ENCODE measurements at regions of chr7 and their contacts with region 1.

Region 1: GRCh38 chr7:151519765-151520418 is at the start of gene RHEB:
- DNase-seq: peak; percentile 93 to 99 (median 98)
- ATAC-seq: peak; percentile 91
- H3K4me3 ChIP-seq: peak within 1 kb of the TSS; percentile 91
- H3K4me3 Mint-ChIP-seq: peak within 1 kb of the TSS; percentile 87 to 97 (median 94)
- H3K27ac ChIP-seq: peak within 1 kb of the TSS; percentile 88
- H3K27ac Mint-ChIP-seq: peak within 1 kb of the TSS; percentile 94 to 99 (median 98)
- H3K4me1 ChIP-seq: peaks cover 24 to 26% of the 10 kb centered on the region in 2 donors
- H3K4me1 Mint-ChIP-seq: peaks cover 32 to 44% (median 36%) of the 10 kb centered on the region in 7 donors
- H3K27me3 ChIP-seq: no peaks in the 10 kb centered on the region
- H3K27me3 Mint-ChIP-seq: peaks cover 0 to 12% (median 0%) of the 10 kb centered on the region in 5 donors
- total RNA-seq, gene RHEB: 31.2 to 62.6 (median 40.2) TPM

Region 2: GRCh38 chr7:151351027-151351426 is 168.9 kb before region 1 on chr7:
- CTCF ChIA-PET with region 1: no interaction called
- POLR2A ChIA-PET with region 1: no interaction called
- intact Hi-C with region 1: loop called (anchors 1 to 2 kb)
- DNase-seq: peak in 2 of 9 donors; percentile 7 to 45
- ATAC-seq: no peak
- H3K4me3 ChIP-seq: no peak overlapping the region
- H3K4me3 Mint-ChIP-seq: peak overlapping the region; percentile 56 to 86 (median 72)
- H3K27ac ChIP-seq: peak overlapping the region; percentile 89
- H3K27ac Mint-ChIP-seq: peak overlapping the region; percentile 74 to 100 (median 93)
- H3K4me1 ChIP-seq: peaks cover 28 to 35% of the 10 kb centered on the region in 2 donors
- H3K4me1 Mint-ChIP-seq: peaks cover 19 to 74% (median 69%) of the 10 kb centered on the region in 7 donors
- H3K27me3 ChIP-seq: no peaks in the 10 kb centered on the region
- H3K27me3 Mint-ChIP-seq: no peaks in the 10 kb centered on the region

Region 3: GRCh38 chr7:151497306-151497871 is 22.5 kb before region 1 on chr7:
- CTCF ChIA-PET with region 1: no interaction called
- POLR2A ChIA-PET with region 1: interaction called, 4 read pairs
- intact Hi-C with region 1: loop called in 1 of 2 experiments (anchors 2 kb)
- DNase-seq: no peak
- ATAC-seq: no peak
- H3K4me3 ChIP-seq: no peak overlapping the region
- H3K4me3 Mint-ChIP-seq: no peak overlapping the region
- H3K27ac ChIP-seq: no peak overlapping the region
- H3K27ac Mint-ChIP-seq: peak overlapping the region in 1 of 9 donors; percentile 60
- H3K4me1 ChIP-seq: peaks cover 3 to 6% of the 10 kb centered on the region in 2 donors
- H3K4me1 Mint-ChIP-seq: peaks cover 56 to 89% (median 80%) of the 10 kb centered on the region in 7 donors
- H3K27me3 ChIP-seq: no peaks in the 10 kb centered on the region
- H3K27me3 Mint-ChIP-seq: no peaks in the 10 kb centered on the region

Region 4: DNA sequence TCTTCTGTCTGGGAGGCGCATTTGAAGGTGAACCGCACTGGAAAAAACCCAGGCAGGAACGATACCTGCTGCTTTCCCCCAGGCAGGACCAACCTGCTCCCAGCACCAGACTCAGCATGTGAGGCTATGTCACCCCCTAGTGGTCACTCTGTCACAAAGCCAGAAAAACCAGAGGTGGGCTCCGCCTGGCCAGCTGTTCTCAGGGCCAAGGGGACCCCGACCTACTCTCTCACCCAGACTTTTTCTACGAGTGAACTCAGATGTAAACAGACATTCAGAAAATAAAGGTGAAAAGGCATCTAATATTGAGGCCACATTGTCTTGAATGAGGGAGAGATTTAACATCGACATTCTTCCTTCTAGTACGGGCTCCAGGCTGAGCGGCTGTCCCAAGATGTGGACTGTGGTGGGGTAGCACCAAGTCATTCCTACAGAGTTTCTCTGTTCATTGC is 239.7 kb after region 1 on chr7:
- CTCF ChIA-PET with region 1: no interaction called
- POLR2A ChIA-PET with region 1: no interaction called
- intact Hi-C with region 1: loop called in 1 of 2 experiments (anchors 1 kb)
- DNase-seq: peak in 8 of 9 donors; percentile 38 to 67 (median 58)
- ATAC-seq: peak; percentile 67
- H3K4me3 ChIP-seq: no peak overlapping the region
- H3K4me3 Mint-ChIP-seq: no peak overlapping the region
- H3K27ac ChIP-seq: no peak overlapping the region
- H3K27ac Mint-ChIP-seq: peak overlapping the region in 6 of 9 donors; percentile 8 to 83 (median 56)
- H3K4me1 ChIP-seq: peaks cover 12 to 22% of the 10 kb centered on the region in 2 donors
- H3K4me1 Mint-ChIP-seq: peaks cover 17 to 60% (median 33%) of the 10 kb centered on the region in 7 donors
- H3K27me3 ChIP-seq: no peaks in the 10 kb centered on the region
- H3K27me3 Mint-ChIP-seq: no peaks in the 10 kb centered on the region

Region 5: GRCh38 chr7:151897161-151897731 is 377.4 kb after region 1 on chr7:
- CTCF ChIA-PET with region 1: no interaction called
- POLR2A ChIA-PET with region 1: no interaction called
- intact Hi-C with region 1: no loop called
- DNase-seq: no peak
- ATAC-seq: no peak
- H3K4me3 ChIP-seq: no peak overlapping the region
- H3K4me3 Mint-ChIP-seq: peak overlapping the region in 1 of 10 donors; percentile 47
- H3K27ac ChIP-seq: no peak overlapping the region
- H3K27ac Mint-ChIP-seq: peak overlapping the region in 1 of 9 donors; percentile 17
- H3K4me1 ChIP-seq: no peaks in the 10 kb centered on the region
- H3K4me1 Mint-ChIP-seq: peaks cover 0 to 4% (median 0%) of the 10 kb centered on the region in 7 donors
- H3K27me3 ChIP-seq: no peaks in the 10 kb centered on the region
- H3K27me3 Mint-ChIP-seq: peaks cover 13 to 21% (median 16%) of the 10 kb centered on the region in 5 donors

Region 6: DNA sequence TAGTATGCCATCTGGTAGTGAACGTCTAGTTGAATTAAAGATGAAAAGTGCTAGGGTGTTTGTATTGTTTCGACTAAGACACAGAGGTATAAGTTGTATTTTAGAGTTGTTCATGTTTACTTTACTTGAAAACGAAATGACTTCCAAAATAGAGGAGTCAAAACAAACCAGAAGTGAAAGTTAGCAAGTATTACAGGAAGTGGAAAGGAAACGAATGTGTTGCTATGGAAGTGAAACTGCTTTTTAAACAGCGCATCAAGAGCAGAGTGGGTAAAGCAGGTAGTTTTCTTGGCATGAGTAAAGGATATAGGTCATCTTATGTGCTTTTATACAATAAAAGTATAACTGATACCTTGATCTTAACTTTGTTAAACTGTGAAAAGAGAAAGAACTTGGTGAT is 416.3 kb after region 1 on chr7:
- CTCF ChIA-PET with region 1: no interaction called
- POLR2A ChIA-PET with region 1: no interaction called
- intact Hi-C with region 1: loop called (anchors 1 to 10 kb)
- DNase-seq: peak in 7 of 9 donors; percentile 43 to 78 (median 67)
- ATAC-seq: peak; percentile 83
- H3K4me3 ChIP-seq: peak overlapping the region; percentile 39
- H3K4me3 Mint-ChIP-seq: peak overlapping the region; percentile 67 to 91 (median 80)
- H3K27ac ChIP-seq: peak overlapping the region; percentile 68
- H3K27ac Mint-ChIP-seq: peak overlapping the region; percentile 91 to 99 (median 97)
- H3K4me1 ChIP-seq: peaks cover 8% of the 10 kb centered on the region in 2 donors
- H3K4me1 Mint-ChIP-seq: peaks cover 17 to 40% (median 26%) of the 10 kb centered on the region in 7 donors
- H3K27me3 ChIP-seq: no peaks in the 10 kb centered on the region
- H3K27me3 Mint-ChIP-seq: peaks cover 0 to 27% (median 0%) of the 10 kb centered on the region in 5 donors